ENCODE measurements at regions of chr1 and their contacts with region 1.

Region 1: GRCh38 chr1:202247894-202248681 is 54.5 kb downstream of the LGR6 start:
- DNase-seq: no peak
- ATAC-seq: no peak
- H3K4me3 Mint-ChIP-seq: no peak overlapping the region
- H3K27ac Mint-ChIP-seq: no peak overlapping the region
- H3K4me1 Mint-ChIP-seq: no peaks in the 10 kb centered on the region
- H3K27me3 Mint-ChIP-seq: peaks cover 10% of the 10 kb centered on the region

Region 2: DNA sequence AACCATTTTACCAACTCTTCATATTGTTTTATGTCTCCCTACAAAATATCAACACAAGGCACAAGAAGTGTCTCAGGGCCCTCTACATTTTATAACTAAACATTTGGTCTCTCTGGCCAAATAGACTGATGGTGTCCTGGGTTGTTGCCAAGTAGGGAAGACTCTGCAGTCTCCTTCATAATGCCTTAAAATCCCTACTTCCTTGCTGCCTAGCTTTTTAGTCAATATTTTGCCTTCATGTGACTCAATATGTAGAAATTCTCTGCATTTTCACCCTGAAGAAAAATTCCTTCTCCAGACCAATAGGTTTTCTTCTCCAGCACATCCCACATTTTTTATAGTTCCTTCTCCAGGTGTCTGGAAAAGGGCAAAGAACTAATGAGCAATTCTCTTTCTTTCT is 491.7 kb before region 1 on chr1:
- CTCF ChIA-PET with region 1: no interaction called
- POLR2A ChIA-PET with region 1: no interaction called
- intact Hi-C with region 1: no loop called
- DNase-seq: no peak
- ATAC-seq: no peak
- H3K4me3 Mint-ChIP-seq: no peak overlapping the region
- H3K27ac Mint-ChIP-seq: no peak overlapping the region
- H3K4me1 Mint-ChIP-seq: peaks cover 12% of the 10 kb centered on the region
- H3K27me3 Mint-ChIP-seq: peaks cover 2% of the 10 kb centered on the region

Region 3: DNA sequence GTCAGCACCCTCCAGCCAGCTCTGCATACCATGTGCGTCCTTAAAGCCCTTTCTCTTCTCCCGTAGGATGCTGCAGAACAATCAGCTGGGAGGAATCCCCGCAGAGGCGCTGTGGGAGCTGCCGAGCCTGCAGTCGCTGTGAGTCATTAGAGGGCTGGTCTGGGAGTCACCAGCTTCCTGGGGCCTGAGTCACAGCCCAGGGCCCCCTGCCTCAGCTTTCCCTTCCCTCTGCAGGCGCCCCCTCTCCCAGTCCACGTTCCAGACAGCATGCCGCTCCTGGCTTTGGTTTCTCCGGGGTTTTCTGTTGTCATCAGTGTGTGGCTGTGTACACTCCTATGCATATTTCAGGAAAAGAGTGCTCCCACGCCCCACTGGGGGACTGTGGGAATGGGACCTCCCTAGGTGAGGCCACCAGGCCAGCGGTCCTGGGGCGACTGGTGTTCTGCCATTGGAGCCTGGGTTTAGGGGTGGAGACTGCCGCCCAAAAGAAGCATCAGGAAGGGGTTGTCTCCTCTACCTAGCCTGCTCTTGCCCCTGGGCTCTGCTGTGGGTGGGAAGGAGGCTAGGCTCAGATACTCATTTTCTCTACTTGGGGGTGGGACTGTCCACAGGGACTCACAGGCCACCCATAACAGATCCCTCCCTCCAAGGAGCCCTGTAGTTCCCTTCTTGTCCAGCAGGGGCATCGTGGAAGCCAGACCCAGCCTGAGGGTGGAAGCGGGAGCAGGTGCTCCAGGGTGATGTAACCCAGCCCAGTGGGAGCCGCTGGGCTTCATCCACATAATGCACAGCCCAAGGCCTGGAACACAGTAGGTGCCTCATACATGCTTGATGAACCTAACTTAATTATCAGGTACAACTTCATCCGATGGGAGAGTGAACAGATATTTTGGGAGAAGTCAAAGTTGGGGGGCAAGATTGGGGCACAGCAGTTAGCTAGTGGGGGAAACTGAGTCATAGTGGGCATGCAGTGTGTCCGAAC is 11.9 kb before region 1 on chr1:
- CTCF ChIA-PET with region 1: interaction called, 11 read pairs
- POLR2A ChIA-PET with region 1: no interaction called
- intact Hi-C with region 1: no loop called
- DNase-seq: peak; percentile 84
- ATAC-seq: peak; percentile 89
- H3K4me3 Mint-ChIP-seq: no peak overlapping the region
- H3K27ac Mint-ChIP-seq: no peak overlapping the region
- H3K4me1 Mint-ChIP-seq: peaks cover 2% of the 10 kb centered on the region
- H3K27me3 Mint-ChIP-seq: peaks cover 12% of the 10 kb centered on the region

Region 4: GRCh38 chr1:202270871-202271326 is 22.8 kb after region 1 on chr1:
- CTCF ChIA-PET with region 1: no interaction called
- POLR2A ChIA-PET with region 1: no interaction called
- intact Hi-C with region 1: no loop called
- DNase-seq: no peak
- ATAC-seq: no peak
- H3K4me3 Mint-ChIP-seq: no peak overlapping the region
- H3K27ac Mint-ChIP-seq: no peak overlapping the region
- H3K4me1 Mint-ChIP-seq: no peaks in the 10 kb centered on the region
- H3K27me3 Mint-ChIP-seq: peaks cover 7% of the 10 kb centered on the region

Measured in activated CD4-positive, alpha-beta T cell treated with anti-CD3 and anti-CD28 coated beads for 36 hours (primary cell).